MCF 10A (cell line): ENCODE measurements at regions of chr5 and their contacts with region 1.

Region 1: GRCh38 chr5:116032094-116032517 is at the start of gene ARL14EPL:
- DNase-seq: peak; percentile 88
- H3K4me3 Mint-ChIP-seq: no peak within 1 kb of the TSS
- H3K27ac Mint-ChIP-seq: no peak within 1 kb of the TSS
- H3K4me1 Mint-ChIP-seq: no peaks in the 10 kb centered on the region
- H3K27me3 Mint-ChIP-seq: no peaks in the 10 kb centered on the region
- CTCF ChIP-seq: peak; percentile 15
- total RNA-seq, gene ARL14EPL: not detected in 2 replicates

Region 2: GRCh38 chr5:115634343-115635132 is 397.6 kb before region 1 on chr5:
- CTCF ChIA-PET with region 1: interaction called, 10 read pairs
- POLR2A ChIA-PET with region 1: no interaction called
- intact Hi-C with region 1: loop called (anchors 1 kb)
- DNase-seq: peak; percentile 86
- H3K4me3 Mint-ChIP-seq: peak overlapping the region; percentile 56
- H3K27ac Mint-ChIP-seq: no peak overlapping the region
- H3K4me1 Mint-ChIP-seq: peaks cover 4% of the 10 kb centered on the region
- H3K27me3 Mint-ChIP-seq: no peaks in the 10 kb centered on the region
- CTCF ChIP-seq: peak; percentile 81

Region 3: GRCh38 chr5:115831163-115831768 is 200.8 kb before region 1 on chr5:
- CTCF ChIA-PET with region 1: interaction called, 8 read pairs
- POLR2A ChIA-PET with region 1: no interaction called
- intact Hi-C with region 1: loop called (anchors 10 kb)
- DNase-seq: peak; percentile 63
- H3K4me3 Mint-ChIP-seq: no peak overlapping the region
- H3K27ac Mint-ChIP-seq: peak overlapping the region; percentile 19
- H3K4me1 Mint-ChIP-seq: peaks cover 7% of the 10 kb centered on the region
- H3K27me3 Mint-ChIP-seq: no peaks in the 10 kb centered on the region
- CTCF ChIP-seq: peak; percentile 62

Region 4: DNA sequence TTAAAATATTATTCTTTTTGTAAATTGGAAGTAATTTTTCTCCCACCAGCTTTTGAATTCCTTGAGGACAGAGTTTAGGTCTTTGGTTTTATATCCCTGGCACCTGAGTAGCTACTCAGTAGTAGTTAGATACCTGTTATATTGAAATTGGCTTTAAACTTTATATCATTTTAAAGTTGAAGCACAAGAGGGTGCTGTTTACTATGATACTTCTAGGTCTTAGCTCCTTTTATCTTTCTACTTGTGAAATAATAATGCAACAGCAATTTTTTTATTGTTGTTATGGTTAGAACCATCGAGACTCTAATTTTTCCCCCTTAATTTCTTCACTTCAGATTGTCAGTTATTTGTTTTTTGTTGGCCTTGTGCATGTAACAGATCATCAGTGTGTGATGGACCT is 144.1 kb before region 1 on chr5:
- CTCF ChIA-PET with region 1: interaction called, 5 read pairs
- POLR2A ChIA-PET with region 1: no interaction called
- intact Hi-C with region 1: loop called (anchors 1 kb)
- DNase-seq: peak; percentile 27
- H3K4me3 Mint-ChIP-seq: no peak overlapping the region
- H3K27ac Mint-ChIP-seq: no peak overlapping the region
- H3K4me1 Mint-ChIP-seq: no peaks in the 10 kb centered on the region
- H3K27me3 Mint-ChIP-seq: no peaks in the 10 kb centered on the region
- CTCF ChIP-seq: peak; percentile 16

Region 5: GRCh38 chr5:116176124-116176523 is 144.0 kb after region 1 on chr5:
- CTCF ChIA-PET with region 1: no interaction called
- POLR2A ChIA-PET with region 1: no interaction called
- intact Hi-C with region 1: no loop called
- DNase-seq: peak; percentile 20
- H3K4me3 Mint-ChIP-seq: no peak overlapping the region
- H3K27ac Mint-ChIP-seq: no peak overlapping the region
- H3K4me1 Mint-ChIP-seq: peaks cover 6% of the 10 kb centered on the region
- H3K27me3 Mint-ChIP-seq: no peaks in the 10 kb centered on the region
- CTCF ChIP-seq: no peak